Dorsolateral prefrontal cortex (tissue), 120 donors: ENCODE measurements at regions of chr19 and their contacts with region 1.

Region 1: DNA sequence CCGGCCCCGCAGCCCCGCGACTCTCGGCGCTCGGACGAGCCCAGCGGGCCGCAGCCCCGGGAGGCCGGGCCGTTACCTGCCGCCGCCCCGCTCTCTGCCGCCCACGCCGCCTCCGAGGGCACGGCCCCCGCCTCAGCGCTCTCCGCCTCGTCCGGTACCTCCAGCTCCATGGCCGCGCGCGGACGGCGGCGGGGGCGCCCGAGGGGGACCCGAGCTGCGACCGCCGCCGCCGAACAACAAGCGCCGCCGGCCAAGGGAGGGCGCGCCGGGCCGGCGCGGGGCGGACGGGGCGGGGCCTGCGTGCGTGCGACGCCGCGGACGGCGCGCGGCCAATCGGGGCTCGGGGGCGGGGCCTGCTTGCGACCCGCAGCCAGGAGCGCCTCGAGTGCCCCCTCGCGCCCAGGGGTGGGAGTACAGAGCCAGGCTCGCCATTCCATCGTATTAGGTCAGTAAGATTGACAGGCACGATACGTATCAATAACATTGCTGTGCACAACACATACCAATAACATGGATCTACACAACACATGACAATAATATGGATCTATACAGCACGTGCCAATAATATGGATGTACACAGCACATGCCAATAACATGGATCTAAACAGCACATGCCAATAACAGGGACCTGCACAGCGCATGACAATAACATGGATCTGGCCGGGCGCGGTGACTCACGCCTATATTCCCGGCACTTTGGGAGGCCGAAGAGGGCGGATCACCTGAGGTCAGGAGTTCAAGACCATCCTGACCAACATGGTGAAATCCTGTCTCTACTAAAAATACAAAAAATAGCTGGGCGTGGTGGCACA is at the start of gene PIP5K1C:
- DNase-seq: peak; percentile 88 to 96 (median 90)
- H3K4me3 ChIP-seq: peak within 1 kb of the TSS; percentile 64 to 97 (median 82)
- H3K27ac ChIP-seq: peak within 1 kb of the TSS in 56 of 59 donors; percentile 20 to 92 (median 84)
- H3K27me3 ChIP-seq: peaks cover 0 to 11% (median 0%) of the 10 kb centered on the region in 45 donors
- CTCF ChIP-seq: peak; percentile 73 to 96 (median 87)
- total RNA-seq, gene PIP5K1C: 52.4 to 207 (median 126) TPM

Region 2: DNA sequence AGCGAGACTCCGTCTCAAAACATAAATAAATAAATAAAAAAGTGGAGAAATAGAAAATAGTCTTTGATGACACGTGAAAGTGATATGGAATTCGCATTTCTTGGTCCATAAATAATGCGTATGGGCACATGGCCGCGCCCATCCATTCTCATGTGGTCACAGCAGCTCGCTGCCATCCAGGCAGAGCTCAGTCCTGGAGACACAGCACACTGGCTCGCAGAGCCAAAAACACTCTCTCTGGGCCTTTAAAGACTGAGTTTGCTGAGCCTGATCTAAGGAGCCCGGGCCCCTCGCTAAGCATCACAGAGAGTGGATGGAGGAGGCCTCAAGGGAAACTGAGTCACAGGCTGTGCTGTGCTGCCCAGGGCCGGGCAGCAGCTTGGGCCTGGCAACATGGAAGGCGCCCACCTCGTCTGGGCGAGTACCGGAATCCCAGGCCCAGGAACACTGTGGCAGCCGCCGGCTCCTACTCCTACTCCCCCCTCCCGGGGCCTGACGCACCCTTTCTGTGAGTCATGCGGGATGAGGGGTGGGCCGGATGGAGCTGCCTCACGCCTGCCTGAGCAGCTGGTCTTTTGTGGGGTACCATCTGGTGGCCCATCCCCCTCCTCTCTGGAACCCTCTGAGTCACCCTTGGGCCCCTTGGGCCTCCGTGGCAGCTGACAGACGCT is 44.9 kb before region 1 on chr19:
- intact Hi-C with region 1: loop called in 1 of 2 experiments (anchors 5 kb)
- DNase-seq: peak; percentile 52 to 97 (median 82)
- H3K4me3 ChIP-seq: no peak overlapping the region
- H3K27ac ChIP-seq: peak overlapping the region in 51 of 59 donors; percentile 2 to 89 (median 63)
- H3K27me3 ChIP-seq: no peaks in the 10 kb centered on the region
- CTCF ChIP-seq: no peak